GM23248 (cell line): ENCODE measurements at regions of chr6 and their contacts with region 1.

Region 1: DNA sequence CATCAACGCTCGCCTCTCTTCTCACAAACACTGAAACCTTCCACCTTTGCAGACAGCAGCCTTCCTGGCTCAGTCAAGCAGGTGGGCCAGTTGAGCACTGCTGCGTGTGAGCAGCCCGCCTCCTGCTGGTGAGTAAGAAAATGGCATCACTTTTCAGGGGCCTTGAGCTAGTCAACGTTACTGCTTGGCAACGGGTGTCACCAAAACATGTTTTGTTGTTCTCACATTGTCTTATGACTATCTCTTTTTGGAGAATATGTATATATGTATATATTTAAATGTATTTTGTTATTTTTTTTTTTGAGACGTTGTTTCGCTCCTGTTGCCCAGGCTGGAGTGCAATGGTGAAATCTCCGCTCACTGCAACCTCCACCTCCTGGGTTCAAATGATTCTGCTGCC is 97.0 kb upstream of the AGPAT4 start:
- DNase-seq: peak; percentile 88
- H3K4me3 ChIP-seq: no peak overlapping the region
- H3K27ac ChIP-seq: no peak overlapping the region
- H3K4me1 ChIP-seq: peaks cover 15% of the 10 kb centered on the region
- H3K27me3 ChIP-seq: no peaks in the 10 kb centered on the region

Region 2: GRCh38 chr6:160520043-160520904 is 850.6 kb before region 1 on chr6:
- in situ Hi-C with region 1: loop called (anchors 25 kb)
- DNase-seq: peak; percentile 79
- H3K4me3 ChIP-seq: peak overlapping the region; percentile 79
- H3K27ac ChIP-seq: no peak overlapping the region
- H3K4me1 ChIP-seq: no peaks in the 10 kb centered on the region
- H3K27me3 ChIP-seq: no peaks in the 10 kb centered on the region

Region 3: GRCh38 chr6:160742090-160742489 is 628.8 kb before region 1 on chr6:
- in situ Hi-C with region 1: loop called (anchors 10 kb)
- DNase-seq: no peak
- H3K4me3 ChIP-seq: no peak overlapping the region
- H3K27ac ChIP-seq: no peak overlapping the region
- H3K4me1 ChIP-seq: no peaks in the 10 kb centered on the region
- H3K27me3 ChIP-seq: no peaks in the 10 kb centered on the region; the same call in 1 of the 2 replicates

Region 4: GRCh38 chr6:160926868-160927291 is 444.0 kb before region 1 on chr6:
- in situ Hi-C with region 1: loop called (anchors 5 kb)
- DNase-seq: no peak
- H3K4me3 ChIP-seq: no peak overlapping the region
- H3K27ac ChIP-seq: no peak overlapping the region
- H3K4me1 ChIP-seq: peaks cover 14% of the 10 kb centered on the region; the same call in 1 of the 2 replicates
- H3K27me3 ChIP-seq: no peaks in the 10 kb centered on the region

Region 5: DNA sequence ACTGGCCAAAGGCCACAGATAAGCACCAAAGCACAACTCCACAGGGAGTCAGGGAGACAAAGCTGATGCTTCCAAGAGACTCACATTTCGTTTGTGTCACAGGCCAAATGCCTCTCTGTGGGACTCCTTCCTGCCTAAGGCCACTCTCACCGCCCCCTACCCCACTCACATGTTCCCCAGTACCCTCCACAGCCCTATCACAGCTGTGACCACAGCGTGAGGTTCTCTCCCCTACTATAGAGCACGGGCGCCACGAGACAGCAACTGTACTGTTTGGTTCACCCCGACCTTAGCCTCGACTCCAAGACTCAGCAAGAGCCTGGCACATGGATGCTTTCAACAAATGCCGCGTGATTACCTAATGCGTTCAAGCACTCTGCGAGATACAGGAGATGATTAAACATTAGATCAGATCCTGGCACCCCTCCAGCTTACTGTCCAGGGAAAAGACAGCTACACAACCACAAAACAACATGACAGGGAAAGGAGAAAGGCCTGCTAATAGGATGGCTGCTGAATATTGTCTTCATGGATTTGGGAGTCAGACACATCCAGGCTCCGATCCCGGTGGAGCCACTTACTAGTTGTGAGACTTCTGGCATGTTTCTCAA is 202.5 kb before region 1 on chr6:
- in situ Hi-C with region 1: loop called (anchors 10 kb)
- DNase-seq: peak; percentile 99
- H3K4me3 ChIP-seq: no peak overlapping the region
- H3K27ac ChIP-seq: peak overlapping the region; percentile 61
- H3K4me1 ChIP-seq: peaks cover 20% of the 10 kb centered on the region
- H3K27me3 ChIP-seq: no peaks in the 10 kb centered on the region